Common myeloid progenitor, CD34-positive (primary cell): ENCODE measurements at regions of chr3 and their contacts with region 1.

Region 1: DNA sequence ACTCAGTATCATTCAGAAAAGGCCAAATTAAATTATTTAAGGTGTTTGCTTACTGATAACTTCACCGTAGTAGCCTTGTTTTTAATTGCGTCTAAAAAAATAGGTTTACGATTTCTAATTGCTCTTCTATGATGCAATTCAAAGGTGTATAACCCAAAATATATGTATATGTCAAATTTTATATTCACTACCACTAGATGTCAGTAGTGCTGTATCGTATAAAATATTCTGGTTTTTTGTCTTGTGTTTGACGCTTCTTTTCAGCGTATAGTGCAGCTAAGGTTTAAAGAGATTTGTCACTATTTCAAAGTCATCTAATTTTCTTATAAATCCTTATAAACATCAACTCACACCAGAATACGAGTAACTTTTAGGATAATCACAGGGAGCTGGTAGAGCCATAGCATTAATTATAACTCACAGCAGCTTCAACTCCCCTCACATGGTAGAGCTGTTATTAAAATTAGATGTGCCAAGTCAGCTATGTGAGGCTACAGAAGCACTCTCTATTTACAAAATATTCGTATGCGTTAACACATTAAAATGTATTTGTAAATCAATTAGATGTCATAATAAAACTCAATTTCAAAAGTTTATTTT is 3.5 kb downstream of the PFN2 start:
- DNase-seq: peak; percentile 52 to 72 (median 66)
- H3K4me3 ChIP-seq: no peak overlapping the region
- H3K27ac ChIP-seq: no peak overlapping the region
- H3K4me1 ChIP-seq: peaks cover 4 to 25% (median 13%) of the 10 kb centered on the region in 4 experiments
- H3K27me3 ChIP-seq: peaks cover 3 to 22% (median 8%) of the 10 kb centered on the region in 5 experiments

Region 2: DNA sequence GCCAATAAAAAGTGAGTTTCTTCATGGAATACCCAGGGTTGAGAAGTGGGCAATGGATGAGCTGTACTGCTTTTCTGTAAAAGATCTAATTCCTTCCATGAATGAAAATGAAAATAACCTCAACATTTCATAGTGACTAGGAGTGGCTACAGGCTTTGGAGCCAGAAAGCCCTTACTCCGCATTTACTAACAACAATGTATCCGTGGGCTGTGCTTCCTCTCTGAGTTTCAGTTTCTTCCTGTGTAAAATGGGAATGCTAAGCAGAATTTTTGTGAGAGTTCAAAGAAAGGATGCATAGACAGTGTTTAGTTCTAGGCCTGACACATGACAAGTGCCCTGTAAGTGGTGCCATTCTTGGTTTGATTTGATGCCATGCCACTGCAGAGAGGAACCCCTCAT is 542.3 kb before region 1 on chr3:
- CTCF ChIA-PET with region 1: no interaction called
- POLR2A ChIA-PET with region 1: no interaction called
- DNase-seq: no peak
- H3K4me3 ChIP-seq: no peak overlapping the region
- H3K27ac ChIP-seq: no peak overlapping the region
- H3K4me1 ChIP-seq: no peaks in the 10 kb centered on the region
- H3K27me3 ChIP-seq: no peaks in the 10 kb centered on the region

Region 3: DNA sequence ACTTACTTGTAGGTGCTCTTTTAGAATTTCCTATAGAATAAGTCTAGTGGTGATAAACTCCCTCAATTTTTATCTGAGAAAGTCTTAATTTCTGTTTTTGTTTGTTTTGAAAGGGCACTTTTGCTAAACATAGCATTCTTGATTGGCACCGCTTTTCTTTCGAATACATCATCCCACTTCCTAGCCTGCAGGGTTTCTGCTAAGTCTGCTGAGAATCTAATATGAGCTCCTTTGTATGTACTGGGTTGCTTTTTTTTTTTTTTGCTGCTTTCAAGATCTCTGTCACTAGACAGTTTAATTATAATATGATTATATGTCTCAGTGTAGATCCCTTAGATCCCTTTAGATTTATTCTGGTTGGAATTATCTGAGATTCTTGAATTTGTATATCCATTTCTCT is 18.0 kb before region 1 on chr3:
- CTCF ChIA-PET with region 1: no interaction called
- POLR2A ChIA-PET with region 1: no interaction called
- DNase-seq: no peak
- H3K4me3 ChIP-seq: no peak overlapping the region
- H3K27ac ChIP-seq: no peak overlapping the region
- H3K4me1 ChIP-seq: peaks cover 0 to 3% (median 0%) of the 10 kb centered on the region in 4 experiments
- H3K27me3 ChIP-seq: no peaks in the 10 kb centered on the region

Region 4: DNA sequence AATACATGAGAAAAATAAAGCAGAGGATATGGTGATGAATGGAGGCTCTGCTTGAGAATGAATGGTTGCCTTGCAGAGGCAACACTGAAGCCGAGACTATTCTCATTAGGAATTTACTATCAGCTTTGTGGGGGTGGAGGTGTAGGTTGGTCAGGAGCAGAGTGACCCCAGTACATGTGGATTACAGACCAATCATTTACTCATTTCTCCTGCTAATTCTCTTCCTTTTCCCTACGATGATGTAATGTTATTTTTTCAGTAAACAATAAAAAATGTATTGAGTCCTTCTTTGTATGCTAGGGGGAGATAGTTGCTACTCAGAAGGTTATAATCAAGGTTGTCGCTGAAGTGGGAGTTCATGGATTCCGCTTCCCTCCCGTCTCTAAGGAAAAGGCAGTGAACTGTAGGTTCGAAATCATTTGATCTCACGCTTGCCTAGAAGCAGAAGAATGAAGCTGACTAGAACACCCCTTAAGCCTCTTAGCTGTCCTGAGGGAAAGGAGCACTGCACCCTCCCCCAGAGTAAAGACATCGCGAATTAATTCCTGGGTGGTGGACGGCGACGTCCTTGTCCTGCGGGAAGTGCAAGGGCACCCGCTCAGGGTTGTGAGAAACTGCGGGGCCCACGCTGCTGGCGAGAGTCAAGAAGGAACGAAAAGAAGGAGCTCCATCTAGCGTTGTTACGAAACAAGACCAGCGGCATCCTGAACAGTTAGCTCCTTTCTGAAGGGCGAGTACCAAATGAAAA is 216.7 kb after region 1 on chr3:
- CTCF ChIA-PET with region 1: interaction called, 13 read pairs
- POLR2A ChIA-PET with region 1: no interaction called
- DNase-seq: peak; percentile 64 to 75 (median 71)
- H3K4me3 ChIP-seq: peak overlapping the region; percentile 11 to 79 (median 44)
- H3K27ac ChIP-seq: no peak overlapping the region
- H3K4me1 ChIP-seq: peaks cover 0 to 10% (median 4%) of the 10 kb centered on the region in 4 experiments
- H3K27me3 ChIP-seq: peaks cover 0 to 12% (median 0%) of the 10 kb centered on the region in 5 experiments

Region 5: GRCh38 chr3:150220799-150221198 is 253.6 kb after region 1 on chr3:
- CTCF ChIA-PET with region 1: interaction called, 16 read pairs
- POLR2A ChIA-PET with region 1: no interaction called
- DNase-seq: no peak
- H3K4me3 ChIP-seq: no peak overlapping the region
- H3K27ac ChIP-seq: no peak overlapping the region
- H3K4me1 ChIP-seq: peaks cover 0 to 6% (median 2%) of the 10 kb centered on the region in 4 experiments
- H3K27me3 ChIP-seq: peaks cover 0 to 31% (median 6%) of the 10 kb centered on the region in 5 experiments